Motor neuron (in vitro differentiated cells): ENCODE measurements at regions of chr3 and their contacts with region 1.

Region 1: DNA sequence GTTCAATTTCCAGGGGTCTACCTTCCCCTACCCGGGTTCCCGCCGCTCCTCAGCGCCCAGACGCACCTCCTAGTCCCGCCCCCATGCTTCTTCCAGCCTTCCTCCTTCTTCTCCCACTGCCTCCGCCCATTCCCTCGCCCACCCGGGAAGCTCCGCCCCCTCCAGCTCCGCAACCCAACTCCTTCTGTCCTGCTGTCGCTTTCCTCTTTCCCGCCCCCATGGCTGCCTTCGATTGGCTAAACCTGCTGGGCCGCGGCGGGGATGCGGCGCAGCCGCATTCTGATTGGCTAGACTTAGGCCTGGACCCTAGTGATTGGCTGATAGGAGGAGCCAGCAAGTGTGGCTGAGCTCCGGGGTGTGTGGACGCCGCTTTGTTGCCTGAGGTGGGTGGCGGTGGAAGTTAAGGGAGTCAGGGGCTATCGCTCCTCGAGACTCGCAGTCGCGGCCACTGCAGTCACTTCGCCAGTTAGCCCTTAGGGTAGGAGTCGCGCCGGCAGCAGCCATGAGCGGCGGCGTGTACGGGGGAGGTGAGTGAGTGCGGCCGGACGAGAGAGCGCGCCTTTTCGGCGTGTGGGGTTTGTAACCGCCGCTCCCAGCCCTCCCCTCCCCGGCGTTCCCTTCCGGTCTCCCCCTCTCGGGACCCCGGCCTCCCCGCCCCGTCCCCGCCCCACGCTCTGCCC is at the start of gene ACTL6A:
- ATAC-seq: peak; percentile 92 to 97 (median 96)
- H3K4me3 ChIP-seq: peak within 1 kb of the TSS; percentile 80 to 97 (median 87)
- H3K27ac ChIP-seq: peak within 1 kb of the TSS; percentile 81 to 93
- H3K4me1 ChIP-seq: peaks cover 5% of the 10 kb centered on the region in 2 donors
- total RNA-seq, gene ACTL6A: 30.2 to 104 (median 51.0) TPM

Region 2: GRCh38 chr3:178907081-178907480 is 655.6 kb before region 1 on chr3:
- in situ Hi-C with region 1: no loop called
- ATAC-seq: no peak
- H3K4me3 ChIP-seq: no peak overlapping the region
- H3K27ac ChIP-seq: no peak overlapping the region
- H3K4me1 ChIP-seq: no peaks in the 10 kb centered on the region

Region 3: GRCh38 chr3:179015551-179016020 is 547.1 kb before region 1 on chr3:
- in situ Hi-C with region 1: loop called in 1 of 9 experiments (anchors 25 kb)
- ATAC-seq: peak; percentile 54 to 90 (median 72)
- H3K4me3 ChIP-seq: no peak overlapping the region
- H3K27ac ChIP-seq: no peak overlapping the region
- H3K4me1 ChIP-seq: peaks cover 0 to 4% of the 10 kb centered on the region in 2 donors

Region 4: GRCh38 chr3:179421500-179421899 is 141.2 kb before region 1 on chr3:
- in situ Hi-C with region 1: loop called in 3 of 9 experiments (anchors 25 kb)
- ATAC-seq: peak in 4 of 8 experiments; percentile 41 to 79 (median 68)
- H3K4me3 ChIP-seq: no peak overlapping the region
- H3K27ac ChIP-seq: no peak overlapping the region
- H3K4me1 ChIP-seq: no peaks in the 10 kb centered on the region

Region 5: GRCh38 chr3:179432021-179432420 is 130.7 kb before region 1 on chr3:
- in situ Hi-C with region 1: loop called in 2 of 9 experiments (anchors 10 to 25 kb)
- ATAC-seq: peak in 1 of 8 experiments; percentile 87
- H3K4me3 ChIP-seq: no peak overlapping the region
- H3K27ac ChIP-seq: no peak overlapping the region
- H3K4me1 ChIP-seq: peaks cover 0 to 7% of the 10 kb centered on the region in 2 donors

Region 6: DNA sequence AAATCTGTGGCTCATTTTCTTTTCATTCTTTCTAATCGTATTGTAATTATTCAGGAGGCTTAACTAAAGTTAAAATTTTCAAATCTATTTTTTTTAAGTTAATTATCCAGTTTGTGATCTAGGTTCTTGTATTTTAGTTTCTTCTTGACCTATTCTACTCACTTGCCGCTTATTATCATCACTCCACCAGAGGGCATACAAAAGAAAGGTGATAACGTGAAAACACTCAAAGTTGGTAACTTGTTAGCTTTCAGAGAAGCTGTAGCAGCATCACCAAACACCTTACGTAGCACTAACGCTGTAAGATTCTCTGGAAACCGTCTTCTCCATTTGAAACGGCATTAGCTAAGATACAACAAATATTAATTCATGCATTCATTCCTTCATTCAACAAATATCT is 116.2 kb before region 1 on chr3:
- in situ Hi-C with region 1: loop called in 1 of 9 experiments (anchors 25 kb)
- ATAC-seq: no peak
- H3K4me3 ChIP-seq: no peak overlapping the region
- H3K27ac ChIP-seq: no peak overlapping the region
- H3K4me1 ChIP-seq: peaks cover 0 to 4% of the 10 kb centered on the region in 2 donors

Region 7: DNA sequence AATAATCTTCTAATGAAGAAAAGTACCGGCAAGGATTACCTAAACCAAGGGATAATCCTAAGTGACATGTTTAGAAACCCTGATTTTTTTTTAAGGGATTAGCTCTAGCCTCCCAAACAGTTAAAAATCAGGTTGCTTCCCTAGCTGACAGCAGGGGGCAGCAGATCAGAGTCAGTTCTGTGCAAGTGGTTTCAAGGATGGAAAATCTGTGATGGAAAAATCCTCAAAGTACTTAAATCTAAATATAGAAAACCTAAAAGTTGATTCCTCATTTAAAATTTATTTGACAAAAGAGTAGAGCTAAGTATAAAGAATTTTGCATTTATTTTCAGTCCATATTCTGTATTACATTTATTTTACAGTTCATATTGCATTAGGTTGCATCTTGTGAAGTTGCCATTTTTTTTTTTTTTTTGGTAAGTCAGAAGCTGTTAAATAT is 366.4 kb after region 1 on chr3:
- in situ Hi-C with region 1: no loop called
- ATAC-seq: peak in 4 of 8 experiments; percentile 11 to 46 (median 40)
- H3K4me3 ChIP-seq: no peak overlapping the region
- H3K27ac ChIP-seq: no peak overlapping the region
- H3K4me1 ChIP-seq: no peaks in the 10 kb centered on the region